ENCODE measurements at regions of chr2 and their contacts with region 1.

Region 1: DNA sequence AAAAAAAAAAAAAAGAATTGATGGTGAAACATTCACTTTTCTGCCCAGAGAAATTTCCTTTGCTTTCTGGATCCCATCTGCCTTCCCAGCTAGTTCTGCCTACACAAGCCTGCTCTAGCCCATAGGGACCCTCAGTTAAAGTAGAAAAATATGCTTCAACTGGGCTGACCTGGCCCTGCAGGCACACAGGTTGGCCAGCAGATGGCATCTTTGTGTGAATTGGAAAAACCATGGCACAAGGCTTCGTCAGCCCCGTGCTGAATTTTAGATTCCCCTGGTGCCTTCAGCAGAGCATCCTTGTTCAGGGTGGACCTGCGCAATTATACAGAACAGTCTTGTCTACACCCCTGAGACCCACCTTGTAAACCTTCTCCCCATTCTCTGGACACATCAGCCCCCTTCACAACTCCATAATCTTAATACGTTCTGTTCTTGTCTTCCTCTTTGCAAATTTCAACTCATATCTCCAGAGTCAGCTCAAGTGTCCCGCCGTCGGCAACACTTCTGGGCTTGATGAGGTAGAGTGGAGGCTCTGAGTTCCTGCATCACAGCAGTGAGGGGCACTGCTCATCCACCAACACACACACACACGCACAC is 114.5 kb downstream of the INSIG2 start:
- DNase-seq: peak; percentile 56
- H3K4me3 Mint-ChIP-seq: no peak overlapping the region
- H3K27ac Mint-ChIP-seq: no peak overlapping the region
- H3K4me1 Mint-ChIP-seq: peaks cover 6% of the 10 kb centered on the region
- H3K27me3 Mint-ChIP-seq: peaks cover 20% of the 10 kb centered on the region
- CTCF ChIP-seq: peak; percentile 75

Region 2: GRCh38 chr2:118186110-118186857 is 16.5 kb before region 1 on chr2:
- CTCF ChIA-PET with region 1: interaction called, 10 read pairs
- POLR2A ChIA-PET with region 1: no interaction called
- intact Hi-C with region 1: no loop called
- DNase-seq: peak; percentile 74
- H3K4me3 Mint-ChIP-seq: peak overlapping the region; percentile 91
- H3K27ac Mint-ChIP-seq: peak overlapping the region; percentile 95
- H3K4me1 Mint-ChIP-seq: peaks cover 9% of the 10 kb centered on the region
- H3K27me3 Mint-ChIP-seq: peaks cover 5% of the 10 kb centered on the region
- CTCF ChIP-seq: no peak

Region 3: DNA sequence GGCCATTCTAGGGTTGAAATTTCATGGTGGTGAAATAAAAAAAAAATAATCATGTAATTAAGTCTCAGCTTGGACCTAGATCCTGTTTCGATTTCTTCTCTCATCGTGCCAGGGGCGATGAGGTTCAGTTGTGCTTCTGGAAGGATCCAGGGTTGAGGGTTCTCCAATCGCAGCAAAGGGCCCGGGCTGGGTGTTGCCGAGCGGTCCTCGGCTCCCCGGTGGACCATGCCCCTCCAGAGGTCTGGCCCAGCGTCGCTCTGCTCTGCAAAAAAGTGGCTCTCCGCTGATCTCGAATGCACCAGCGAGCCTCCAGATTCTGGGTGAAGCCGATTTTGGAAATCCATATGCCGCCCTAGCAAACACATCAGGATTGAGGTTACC is 605.6 kb after region 1 on chr2:
- CTCF ChIA-PET with region 1: no interaction called
- POLR2A ChIA-PET with region 1: no interaction called
- intact Hi-C with region 1: no loop called
- DNase-seq: no peak
- H3K4me3 Mint-ChIP-seq: no peak overlapping the region
- H3K27ac Mint-ChIP-seq: no peak overlapping the region
- H3K4me1 Mint-ChIP-seq: no peaks in the 10 kb centered on the region
- H3K27me3 Mint-ChIP-seq: no peaks in the 10 kb centered on the region
- CTCF ChIP-seq: no peak

Region 4: DNA sequence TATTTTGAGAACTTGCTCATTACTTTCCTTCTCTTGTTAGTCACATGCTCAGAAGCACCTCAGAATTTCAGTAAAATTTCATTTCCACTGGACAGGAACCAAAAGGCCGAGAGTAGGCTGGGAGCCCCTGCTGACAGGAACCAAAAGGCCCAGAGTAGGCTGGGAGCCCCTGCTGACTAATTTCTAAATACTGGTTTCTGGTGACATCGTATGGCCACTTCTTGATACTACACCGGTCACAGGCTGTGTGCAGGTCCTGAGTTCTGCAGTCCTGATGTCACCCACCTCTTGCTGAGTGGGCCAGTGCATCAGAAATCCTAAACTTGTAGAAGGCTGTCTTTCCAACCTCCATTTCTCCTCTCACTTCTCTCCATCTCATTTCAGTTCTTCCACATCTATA is 662.3 kb after region 1 on chr2:
- CTCF ChIA-PET with region 1: interaction called, 8 read pairs
- POLR2A ChIA-PET with region 1: no interaction called
- intact Hi-C with region 1: loop called (anchors 1 kb)
- DNase-seq: peak; percentile 65
- H3K4me3 Mint-ChIP-seq: no peak overlapping the region
- H3K27ac Mint-ChIP-seq: no peak overlapping the region
- H3K4me1 Mint-ChIP-seq: peaks cover 14% of the 10 kb centered on the region
- H3K27me3 Mint-ChIP-seq: no peaks in the 10 kb centered on the region
- CTCF ChIP-seq: peak; percentile 80